ENCODE measurements at regions of chr15 and their contacts with region 1.

Region 1: DNA sequence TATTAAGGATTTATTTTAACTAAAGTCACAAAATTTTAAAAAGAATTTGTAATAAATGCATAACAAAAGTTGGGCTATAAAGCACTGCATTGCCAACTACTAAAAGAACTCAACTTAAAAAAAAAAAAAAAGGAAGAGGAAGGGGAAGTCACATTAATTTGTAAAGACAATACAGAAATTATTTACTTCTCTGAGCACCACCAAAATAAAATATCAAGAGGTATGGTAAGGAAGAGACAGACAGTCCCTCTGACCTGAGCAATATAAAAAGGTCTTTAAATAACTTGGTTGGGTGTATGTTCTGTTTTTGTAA is 83.5 kb downstream of the UACA start:
- DNase-seq: no peak
- ATAC-seq: no peak
- H3K4me3 ChIP-seq: no peak overlapping the region
- H3K27ac ChIP-seq: no peak overlapping the region
- H3K4me1 ChIP-seq: no peaks in the 10 kb centered on the region
- H3K27me3 ChIP-seq: no peaks in the 10 kb centered on the region
- CTCF ChIP-seq: no peak

Region 2: GRCh38 chr15:70748281-70748747 is 68.4 kb after region 1 on chr15:
- intact Hi-C with region 1: no loop called
- DNase-seq: no peak
- ATAC-seq: peak; percentile 66
- H3K4me3 ChIP-seq: no peak overlapping the region
- H3K27ac ChIP-seq: no peak overlapping the region
- H3K4me1 ChIP-seq: peaks cover 28% of the 10 kb centered on the region
- H3K27me3 ChIP-seq: peaks cover 4% of the 10 kb centered on the region
- CTCF ChIP-seq: no peak

Region 3: GRCh38 chr15:70815644-70816043 is 135.8 kb after region 1 on chr15:
- intact Hi-C with region 1: loop called (anchors 10 kb)
- DNase-seq: no peak
- ATAC-seq: no peak
- H3K4me3 ChIP-seq: no peak overlapping the region
- H3K27ac ChIP-seq: no peak overlapping the region
- H3K4me1 ChIP-seq: peaks cover 9% of the 10 kb centered on the region
- H3K27me3 ChIP-seq: no peaks in the 10 kb centered on the region
- CTCF ChIP-seq: no peak

Measured in upper lobe of right lung (tissue), 1 donor.